A673 (cell line): ENCODE measurements at regions of chr11 and their contacts with region 1.

Region 1: GRCh38 chr11:122108192-122108799 is 7.7 kb downstream of the BLID start:
- DNase-seq: peak; percentile 87
- H3K4me3 ChIP-seq: no peak overlapping the region
- H3K27ac ChIP-seq: no peak overlapping the region
- H3K4me1 ChIP-seq: peaks cover 32% of the 10 kb centered on the region
- H3K27me3 ChIP-seq: no peaks in the 10 kb centered on the region
- CTCF ChIP-seq: peak; percentile 97

Region 2: DNA sequence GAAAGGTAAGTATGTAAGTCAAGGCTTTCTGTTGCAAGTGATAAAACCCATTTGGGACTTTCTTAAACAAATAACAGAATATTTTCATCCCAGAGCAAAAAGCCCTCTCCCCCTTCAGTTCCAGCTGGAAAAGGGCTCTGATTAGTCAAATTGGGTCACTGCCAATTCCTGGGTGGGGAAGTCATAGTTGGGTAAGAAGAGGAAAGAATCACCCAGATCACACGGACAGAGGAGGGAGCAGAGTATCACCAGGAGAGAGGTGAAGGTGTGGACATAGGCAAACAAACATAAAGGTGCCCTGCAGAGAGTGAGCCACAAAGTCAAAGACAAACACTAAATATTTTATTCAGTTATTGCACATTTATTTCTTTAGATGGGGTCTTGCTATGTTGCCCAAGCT is 692.4 kb before region 1 on chr11:
- CTCF ChIA-PET with region 1: no interaction called
- POLR2A ChIA-PET with region 1: no interaction called
- intact Hi-C with region 1: no loop called
- DNase-seq: peak; percentile 16
- H3K4me3 ChIP-seq: no peak overlapping the region
- H3K27ac ChIP-seq: no peak overlapping the region
- H3K4me1 ChIP-seq: no peaks in the 10 kb centered on the region
- H3K27me3 ChIP-seq: no peaks in the 10 kb centered on the region
- CTCF ChIP-seq: no peak

Region 3: GRCh38 chr11:121864660-121865059 is 243.6 kb before region 1 on chr11:
- CTCF ChIA-PET with region 1: interaction called, 10 read pairs
- POLR2A ChIA-PET with region 1: no interaction called
- intact Hi-C with region 1: no loop called
- DNase-seq: peak; percentile 15
- H3K4me3 ChIP-seq: no peak overlapping the region
- H3K27ac ChIP-seq: no peak overlapping the region
- H3K4me1 ChIP-seq: no peaks in the 10 kb centered on the region
- H3K27me3 ChIP-seq: no peaks in the 10 kb centered on the region
- CTCF ChIP-seq: peak; percentile 30; the same call in 1 of the 2 replicates

Region 4: GRCh38 chr11:122038543-122038942 is 69.8 kb before region 1 on chr11:
- CTCF ChIA-PET with region 1: no interaction called
- POLR2A ChIA-PET with region 1: no interaction called
- intact Hi-C with region 1: no loop called
- DNase-seq: peak; percentile 66
- H3K4me3 ChIP-seq: no peak overlapping the region
- H3K27ac ChIP-seq: no peak overlapping the region
- H3K4me1 ChIP-seq: no peaks in the 10 kb centered on the region
- H3K27me3 ChIP-seq: no peaks in the 10 kb centered on the region
- CTCF ChIP-seq: no peak

Region 5: DNA sequence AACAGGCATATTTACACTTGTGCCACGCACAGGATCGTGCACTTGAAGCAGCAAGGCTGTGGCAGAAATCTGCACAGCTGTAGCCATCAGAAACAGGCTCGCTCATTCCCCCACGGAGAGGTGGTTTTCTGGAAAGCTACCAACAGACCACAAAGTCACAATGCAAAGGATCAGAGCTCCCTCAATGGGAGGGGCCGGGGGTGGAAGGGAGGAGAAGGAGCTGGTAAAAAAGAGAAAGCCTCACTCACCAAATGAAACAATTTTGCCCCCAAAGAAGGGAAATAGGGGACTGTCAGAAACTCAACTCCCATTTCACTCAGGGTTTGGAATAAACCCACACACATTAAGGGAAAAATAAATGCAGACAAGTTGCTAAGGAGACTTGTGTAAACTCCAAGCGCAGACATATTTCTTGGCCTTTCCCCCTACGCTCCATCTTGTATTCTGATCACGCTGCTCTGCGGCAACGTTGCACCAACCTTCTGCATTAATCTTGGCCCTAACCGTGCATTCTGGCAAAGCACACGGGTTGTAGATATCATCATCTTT is 51.0 kb after region 1 on chr11:
- CTCF ChIA-PET with region 1: no interaction called
- POLR2A ChIA-PET with region 1: no interaction called
- intact Hi-C with region 1: loop called (anchors 5 kb)
- DNase-seq: peak; percentile 90
- H3K4me3 ChIP-seq: peak overlapping the region; percentile 49
- H3K27ac ChIP-seq: peak overlapping the region; percentile 81
- H3K4me1 ChIP-seq: peaks cover 38% of the 10 kb centered on the region
- H3K27me3 ChIP-seq: no peaks in the 10 kb centered on the region
- CTCF ChIP-seq: no peak

Region 6: DNA sequence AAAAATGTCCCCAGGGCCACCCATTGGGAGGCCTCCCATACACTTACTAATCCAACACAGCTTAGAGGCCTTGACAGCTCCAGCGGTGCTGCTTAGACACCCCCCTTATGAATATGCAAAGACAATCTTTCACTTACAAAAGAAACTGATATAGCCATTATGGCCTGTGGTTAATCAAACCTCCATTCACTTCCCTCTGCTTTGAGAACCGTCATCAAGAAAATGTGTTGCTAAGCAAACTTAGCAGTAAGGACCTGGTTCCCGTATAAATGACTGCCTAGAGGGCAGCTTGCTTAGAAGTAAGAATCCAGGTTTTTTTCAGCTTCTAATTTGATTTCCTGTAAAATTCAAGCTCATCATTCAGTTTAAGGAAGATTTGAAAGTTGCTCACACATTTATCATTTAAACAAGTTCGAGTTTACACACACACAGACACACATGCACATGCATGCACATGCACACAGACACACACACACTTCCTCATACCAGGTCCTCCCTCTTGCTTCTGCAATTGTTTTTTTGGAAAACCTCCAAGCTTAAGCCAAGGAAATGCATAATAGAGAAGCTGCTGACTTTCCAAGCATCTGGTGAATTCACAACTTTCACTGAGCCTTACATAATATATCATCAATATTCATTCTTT is 145.4 kb after region 1 on chr11:
- CTCF ChIA-PET with region 1: no interaction called
- POLR2A ChIA-PET with region 1: no interaction called
- intact Hi-C with region 1: no loop called
- DNase-seq: peak; percentile 98
- H3K4me3 ChIP-seq: peak overlapping the region; percentile 4
- H3K27ac ChIP-seq: peak overlapping the region; percentile 88
- H3K4me1 ChIP-seq: peaks cover 65% of the 10 kb centered on the region
- H3K27me3 ChIP-seq: no peaks in the 10 kb centered on the region
- CTCF ChIP-seq: no peak